ENCODE measurements at regions of chr7 and their contacts with region 1.

Region 1: GRCh38 chr7:54743580-54743979 is 15.4 kb downstream of the SEC61G start:
- DNase-seq: no peak
- H3K4me3 ChIP-seq: no peak overlapping the region
- H3K27ac ChIP-seq: no peak overlapping the region
- H3K4me1 ChIP-seq: no peaks in the 10 kb centered on the region
- H3K27me3 ChIP-seq: no peaks in the 10 kb centered on the region
- CTCF ChIP-seq: no peak
- EP300 ChIP-seq: no peak
- POLR2A ChIP-seq: no peak
- RAD21 ChIP-seq: no peak

Region 2: GRCh38 chr7:54758702-54759592 is 15.4 kb after region 1 on chr7 and contains the start of gene SEC61G:
- CTCF ChIA-PET with region 1: no interaction called
- POLR2A ChIA-PET with region 1: interaction called, 10 read pairs
- DNase-seq: peak; percentile 90 to 96
- H3K4me3 ChIP-seq: peak within 1 kb of the TSS; percentile 73 to 100 (median 92)
- H3K27ac ChIP-seq: peak within 1 kb of the TSS; percentile 71
- H3K4me1 ChIP-seq: no peaks in the 10 kb centered on the region; a peak in 1 of 7 replicates
- H3K27me3 ChIP-seq: no peaks in the 10 kb centered on the region
- CTCF ChIP-seq: no peak
- EP300 ChIP-seq: no peak
- POLR2A ChIP-seq: peak; percentile 65 to 90
- RAD21 ChIP-seq: no peak
- total RNA-seq, gene SEC61G: 142 and 156 TPM in 2 replicates

Region 3: DNA sequence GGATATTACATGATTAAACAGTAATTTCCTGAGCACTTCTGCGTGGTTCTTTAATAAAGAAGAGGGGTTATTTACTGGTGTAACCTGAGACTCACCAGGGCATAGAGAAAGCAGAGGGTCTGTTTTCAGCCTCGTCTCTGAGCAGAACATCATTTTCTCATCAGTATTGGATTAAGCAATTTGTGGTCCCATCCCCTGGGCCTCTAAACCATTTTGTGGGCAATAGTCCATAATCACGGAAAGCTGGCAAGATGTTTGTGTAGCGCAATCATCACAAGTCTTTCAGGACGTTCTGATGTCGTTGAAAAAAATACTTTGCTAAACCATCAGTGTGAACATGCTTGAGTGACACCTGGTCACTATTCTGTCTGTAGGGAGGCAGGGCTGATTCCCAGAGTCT is 52.6 kb after region 1 on chr7:
- CTCF ChIA-PET with region 1: no interaction called
- POLR2A ChIA-PET with region 1: no interaction called
- DNase-seq: no peak
- H3K4me3 ChIP-seq: no peak overlapping the region
- H3K27ac ChIP-seq: no peak overlapping the region
- H3K4me1 ChIP-seq: no peaks in the 10 kb centered on the region
- H3K27me3 ChIP-seq: no peaks in the 10 kb centered on the region
- CTCF ChIP-seq: no peak
- EP300 ChIP-seq: no peak
- POLR2A ChIP-seq: no peak
- RAD21 ChIP-seq: no peak